ENCODE measurements at regions of chr3 and their contacts with region 1.

Region 1: GRCh38 chr3:174440741-174441587 is 418.2 kb upstream of the NAALADL2 start:
- DNase-seq: peak; percentile 67 to 85
- ATAC-seq: peak; percentile 84 to 85
- H3K4me3 ChIP-seq: peak overlapping the region; percentile 68 to 90 (median 78)
- H3K27ac ChIP-seq: peak overlapping the region; percentile 83 to 96 (median 95)
- H3K4me1 ChIP-seq: peaks cover 32 to 37% of the 10 kb centered on the region in 2 donors
- H3K27me3 ChIP-seq: no peaks in the 10 kb centered on the region
- CTCF ChIP-seq: peak in 2 of 5 experiments; percentile 4 to 8
- POLR2A ChIP-seq: peak; percentile 50 to 53

Region 2: GRCh38 chr3:173395412-173396181 is 1045.4 kb before region 1 on chr3:
- in situ Hi-C with region 1: no loop called
- intact Hi-C with region 1: loop called (anchors 10 kb)
- DNase-seq: peak; percentile 73 to 75
- ATAC-seq: peak; percentile 81 to 86
- H3K4me3 ChIP-seq: peak overlapping the region; percentile 71 to 93 (median 80)
- H3K27ac ChIP-seq: peak overlapping the region; percentile 62 to 85 (median 74)
- H3K4me1 ChIP-seq: peaks cover 6 to 16% of the 10 kb centered on the region in 2 donors
- H3K27me3 ChIP-seq: peaks cover 6 to 26% (median 16%) of the 10 kb centered on the region in 3 donors
- CTCF ChIP-seq: peak in 1 of 5 experiments; percentile 7
- POLR2A ChIP-seq: peak; percentile 42 to 62

Region 3: GRCh38 chr3:174153871-174154270 is 287.1 kb before region 1 on chr3:
- in situ Hi-C with region 1: no loop called
- intact Hi-C with region 1: no loop called
- DNase-seq: no peak
- ATAC-seq: no peak
- H3K4me3 ChIP-seq: no peak overlapping the region
- H3K27ac ChIP-seq: no peak overlapping the region
- H3K4me1 ChIP-seq: no peaks in the 10 kb centered on the region
- H3K27me3 ChIP-seq: no peaks in the 10 kb centered on the region
- CTCF ChIP-seq: no peak
- POLR2A ChIP-seq: no peak

Region 4: GRCh38 chr3:174330303-174330702 is 110.7 kb before region 1 on chr3:
- in situ Hi-C with region 1: no loop called
- intact Hi-C with region 1: no loop called
- DNase-seq: no peak
- ATAC-seq: no peak
- H3K4me3 ChIP-seq: no peak overlapping the region
- H3K27ac ChIP-seq: no peak overlapping the region
- H3K4me1 ChIP-seq: no peaks in the 10 kb centered on the region
- H3K27me3 ChIP-seq: no peaks in the 10 kb centered on the region
- CTCF ChIP-seq: no peak
- POLR2A ChIP-seq: no peak

Region 5: DNA sequence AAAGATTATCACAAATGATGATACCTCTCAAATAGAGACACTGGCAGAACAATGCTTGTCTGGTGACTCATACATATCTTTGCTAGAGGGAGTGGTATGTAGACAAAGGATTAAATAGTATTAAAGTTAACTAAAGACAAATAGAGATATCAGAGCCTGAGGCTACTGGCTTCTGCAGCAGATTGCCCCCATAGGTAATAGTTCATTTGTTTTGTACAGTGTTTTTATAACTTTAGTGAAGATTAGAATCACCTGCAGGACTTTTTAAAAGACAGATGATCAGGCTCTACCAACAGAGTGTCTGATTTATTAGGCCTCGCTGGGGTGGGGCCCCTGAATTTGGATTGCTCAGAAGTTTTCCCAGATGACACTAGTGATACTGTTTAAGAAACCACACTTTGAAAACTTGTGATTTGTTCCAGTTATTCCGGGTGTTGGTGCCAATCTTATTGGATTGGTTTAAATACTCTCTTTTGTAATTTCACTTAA is 514.6 kb after region 1 on chr3:
- in situ Hi-C with region 1: no loop called
- intact Hi-C with region 1: no loop called
- DNase-seq: no peak
- ATAC-seq: no peak
- H3K4me3 ChIP-seq: no peak overlapping the region
- H3K27ac ChIP-seq: no peak overlapping the region
- H3K4me1 ChIP-seq: no peaks in the 10 kb centered on the region
- H3K27me3 ChIP-seq: no peaks in the 10 kb centered on the region
- CTCF ChIP-seq: no peak
- POLR2A ChIP-seq: no peak